CD4-positive, alpha-beta T cell (primary cell): ENCODE measurements at regions of chrX and their contacts with region 1.

Region 1: DNA sequence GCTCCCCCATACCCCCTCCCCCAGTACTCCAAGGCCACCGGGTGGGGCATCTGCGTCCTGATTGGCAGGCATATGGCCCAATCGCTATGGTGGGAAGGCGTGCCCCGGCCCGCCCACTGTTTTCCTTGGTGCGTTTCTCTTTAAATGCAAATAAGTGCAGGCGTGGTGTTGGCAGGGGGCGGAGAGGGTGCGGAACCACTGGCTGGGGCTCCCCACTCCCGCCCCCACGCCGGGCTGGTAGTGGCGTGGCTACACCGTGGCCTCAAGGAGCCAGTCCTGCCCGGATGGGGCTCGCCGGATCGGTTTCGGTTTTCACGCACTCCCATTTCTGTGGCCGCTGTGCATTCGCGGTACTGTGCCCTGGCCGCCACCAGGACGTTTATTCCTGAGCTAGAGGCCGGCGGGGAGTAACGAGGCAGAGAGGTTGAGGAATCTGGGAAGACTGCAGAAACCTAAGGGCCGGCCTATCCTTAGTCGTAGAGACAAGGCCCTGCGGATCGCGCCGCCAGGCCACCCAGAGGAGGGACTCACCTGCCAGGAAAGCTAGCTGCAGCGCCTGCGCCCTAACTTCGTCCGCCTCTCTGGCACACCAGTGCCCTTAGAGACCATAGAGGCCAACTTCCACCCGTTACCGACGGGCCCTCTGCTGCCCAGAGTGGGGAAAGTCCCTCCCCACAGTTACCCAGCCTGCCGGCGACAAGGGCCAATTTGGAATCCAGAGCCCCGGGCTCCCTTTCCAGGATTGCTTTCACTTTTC is 405 bp upstream of the AMER1 start:
- DNase-seq: peak; percentile 77 to 93 (median 86)
- ATAC-seq: peak; percentile 86
- H3K4me3 ChIP-seq: peak overlapping the region; percentile 86
- H3K4me3 Mint-ChIP-seq: peak overlapping the region; percentile 99
- H3K27ac ChIP-seq: peak overlapping the region; percentile 81 to 90
- H3K27ac Mint-ChIP-seq: peak overlapping the region; percentile 90
- H3K4me1 ChIP-seq: peaks cover 24% of the 10 kb centered on the region
- H3K4me1 Mint-ChIP-seq: peaks cover 22% of the 10 kb centered on the region
- H3K27me3 ChIP-seq: no peaks in the 10 kb centered on the region
- H3K27me3 Mint-ChIP-seq: no peaks in the 10 kb centered on the region
- CTCF ChIP-seq: no peak

Region 2: GRCh38 chrX:63551856-63552255 is 654.1 kb before region 1 on chrX:
- CTCF ChIA-PET with region 1: no interaction called
- POLR2A ChIA-PET with region 1: no interaction called
- intact Hi-C with region 1: loop called in 1 of 2 experiments (anchors 10 kb)
- DNase-seq: no peak
- ATAC-seq: no peak
- H3K4me3 ChIP-seq: no peak overlapping the region
- H3K4me3 Mint-ChIP-seq: no peak overlapping the region
- H3K27ac ChIP-seq: no peak overlapping the region
- H3K27ac Mint-ChIP-seq: no peak overlapping the region
- H3K4me1 ChIP-seq: no peaks in the 10 kb centered on the region
- H3K4me1 Mint-ChIP-seq: no peaks in the 10 kb centered on the region
- H3K27me3 ChIP-seq: no peaks in the 10 kb centered on the region
- H3K27me3 Mint-ChIP-seq: no peaks in the 10 kb centered on the region
- CTCF ChIP-seq: no peak

Region 3: GRCh38 chrX:63754860-63755582 is 450.9 kb before region 1 on chrX:
- CTCF ChIA-PET with region 1: no interaction called
- POLR2A ChIA-PET with region 1: interaction called, 14 read pairs
- intact Hi-C with region 1: loop called in 1 of 2 experiments (anchors 2 kb)
- DNase-seq: peak; percentile 70 to 94 (median 83)
- ATAC-seq: peak; percentile 92
- H3K4me3 ChIP-seq: peak overlapping the region; percentile 93
- H3K4me3 Mint-ChIP-seq: peak overlapping the region; percentile 99
- H3K27ac ChIP-seq: peak overlapping the region; percentile 70 to 80
- H3K27ac Mint-ChIP-seq: peak overlapping the region; percentile 97
- H3K4me1 ChIP-seq: peaks cover 11% of the 10 kb centered on the region
- H3K4me1 Mint-ChIP-seq: peaks cover 28% of the 10 kb centered on the region
- H3K27me3 ChIP-seq: no peaks in the 10 kb centered on the region
- H3K27me3 Mint-ChIP-seq: no peaks in the 10 kb centered on the region
- CTCF ChIP-seq: no peak

Region 4: DNA sequence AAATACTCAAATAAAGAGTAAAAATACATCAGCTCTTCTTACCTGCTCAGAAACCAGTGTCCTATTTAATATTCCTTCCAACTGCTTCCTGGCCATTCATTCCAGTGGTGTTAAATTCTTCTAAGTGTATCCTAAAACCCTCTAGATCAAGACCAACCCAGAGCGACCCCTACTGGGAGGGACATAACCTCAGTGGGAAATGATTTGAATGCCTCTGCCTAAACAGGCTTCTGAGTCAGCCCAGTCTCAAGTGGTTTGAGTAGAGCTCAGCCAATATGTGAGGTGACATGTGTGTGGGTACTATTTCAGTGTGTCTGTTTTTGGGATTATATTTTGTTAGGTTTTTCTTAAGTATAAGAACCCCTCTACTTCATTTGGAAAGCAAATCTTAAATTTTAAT is 287.3 kb before region 1 on chrX:
- CTCF ChIA-PET with region 1: no interaction called
- POLR2A ChIA-PET with region 1: no interaction called
- intact Hi-C with region 1: no loop called
- DNase-seq: no peak
- ATAC-seq: no peak
- H3K4me3 ChIP-seq: no peak overlapping the region
- H3K4me3 Mint-ChIP-seq: no peak overlapping the region
- H3K27ac ChIP-seq: no peak overlapping the region
- H3K27ac Mint-ChIP-seq: no peak overlapping the region
- H3K4me1 ChIP-seq: no peaks in the 10 kb centered on the region
- H3K4me1 Mint-ChIP-seq: no peaks in the 10 kb centered on the region
- H3K27me3 ChIP-seq: no peaks in the 10 kb centered on the region
- H3K27me3 Mint-ChIP-seq: no peaks in the 10 kb centered on the region
- CTCF ChIP-seq: no peak

Region 5: GRCh38 chrX:64394874-64395567 is 189.1 kb after region 1 on chrX and contains the start of gene MTMR8:
- CTCF ChIA-PET with region 1: no interaction called
- POLR2A ChIA-PET with region 1: interaction called, 8 read pairs
- intact Hi-C with region 1: loop called (anchors 1 to 2 kb)
- DNase-seq: peak; percentile 59 to 89 (median 73)
- ATAC-seq: peak; percentile 95
- H3K4me3 ChIP-seq: peak within 1 kb of the TSS; percentile 85
- H3K4me3 Mint-ChIP-seq: peak within 1 kb of the TSS; percentile 90
- H3K27ac ChIP-seq: peak within 1 kb of the TSS; percentile 21 to 22
- H3K27ac Mint-ChIP-seq: peak within 1 kb of the TSS; percentile 85
- H3K4me1 ChIP-seq: peaks cover 17% of the 10 kb centered on the region
- H3K4me1 Mint-ChIP-seq: peaks cover 46% of the 10 kb centered on the region
- H3K27me3 ChIP-seq: no peaks in the 10 kb centered on the region
- H3K27me3 Mint-ChIP-seq: no peaks in the 10 kb centered on the region
- CTCF ChIP-seq: no peak
- total RNA-seq, gene MTMR8: 2.3 to 3.1 TPM

Region 6: GRCh38 chrX:64975989-64976672 is 770.2 kb after region 1 on chrX and contains the start of gene ZC4H2:
- CTCF ChIA-PET with region 1: no interaction called
- POLR2A ChIA-PET with region 1: no interaction called
- intact Hi-C with region 1: loop called (anchors 10 kb)
- DNase-seq: peak; percentile 34 to 85 (median 59)
- ATAC-seq: peak; percentile 96
- H3K4me3 ChIP-seq: peak within 1 kb of the TSS; percentile 74
- H3K4me3 Mint-ChIP-seq: peak within 1 kb of the TSS; percentile 98
- H3K27ac ChIP-seq: no peak within 1 kb of the TSS
- H3K27ac Mint-ChIP-seq: peak within 1 kb of the TSS; percentile 81
- H3K4me1 ChIP-seq: peaks cover 14% of the 10 kb centered on the region
- H3K4me1 Mint-ChIP-seq: peaks cover 28% of the 10 kb centered on the region
- H3K27me3 ChIP-seq: no peaks in the 10 kb centered on the region
- H3K27me3 Mint-ChIP-seq: no peaks in the 10 kb centered on the region
- CTCF ChIP-seq: no peak
- total RNA-seq, gene ZC4H2: 7.8 to 8.7 TPM

Region 7: DNA sequence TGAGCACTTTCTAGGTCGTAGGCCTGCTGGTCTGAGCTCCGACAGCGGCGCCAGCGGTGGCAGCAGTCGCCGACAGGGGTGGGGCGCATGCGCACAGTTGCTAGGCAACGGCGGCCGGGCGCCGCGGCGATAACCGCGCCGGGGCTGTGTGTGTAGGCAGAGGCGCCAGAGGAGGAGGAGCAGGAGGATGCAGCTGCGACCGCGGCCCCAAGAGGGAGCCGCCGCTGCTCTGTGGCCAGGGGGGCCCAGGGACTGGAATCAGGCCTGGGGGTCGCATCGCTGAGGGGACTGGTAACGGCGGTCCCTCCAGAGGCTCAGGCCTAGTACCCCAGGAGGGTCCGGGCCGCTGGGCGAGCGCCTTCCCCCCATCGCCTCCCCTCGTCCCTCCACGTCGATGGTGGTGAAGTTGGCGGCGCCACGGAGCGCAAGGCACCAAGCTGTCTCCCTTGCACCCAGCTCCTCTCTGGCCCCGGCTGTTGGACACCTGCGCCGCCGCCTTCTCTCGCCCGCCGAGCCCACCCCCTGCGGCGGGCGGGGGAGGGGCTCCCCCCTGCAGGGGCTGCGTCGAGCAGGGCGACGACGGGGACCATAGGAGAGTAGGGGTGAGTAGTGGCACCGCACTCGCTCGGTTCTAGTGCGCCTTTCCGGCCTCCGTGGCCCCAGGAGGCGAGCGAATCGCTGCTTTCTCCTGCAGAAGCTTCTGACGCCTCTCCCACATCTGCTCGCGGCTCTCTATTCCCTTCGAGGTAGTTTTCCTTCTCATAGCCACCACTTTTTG is 828.9 kb after region 1 on chrX:
- CTCF ChIA-PET with region 1: no interaction called
- POLR2A ChIA-PET with region 1: interaction called, 6 read pairs
- intact Hi-C with region 1: loop called in 1 of 2 experiments (anchors 5 kb)
- DNase-seq: peak; percentile 61 to 92 (median 78)
- ATAC-seq: peak; percentile 87
- H3K4me3 ChIP-seq: peak within 1 kb of the TSS; percentile 71
- H3K4me3 Mint-ChIP-seq: peak within 1 kb of the TSS; percentile 98
- H3K27ac ChIP-seq: peak within 1 kb of the TSS; percentile 52 to 59
- H3K27ac Mint-ChIP-seq: peak within 1 kb of the TSS; percentile 98
- H3K4me1 ChIP-seq: peaks cover 10% of the 10 kb centered on the region
- H3K4me1 Mint-ChIP-seq: peaks cover 42% of the 10 kb centered on the region
- H3K27me3 ChIP-seq: no peaks in the 10 kb centered on the region
- H3K27me3 Mint-ChIP-seq: no peaks in the 10 kb centered on the region
- CTCF ChIP-seq: peak; percentile 65

Region 8: DNA sequence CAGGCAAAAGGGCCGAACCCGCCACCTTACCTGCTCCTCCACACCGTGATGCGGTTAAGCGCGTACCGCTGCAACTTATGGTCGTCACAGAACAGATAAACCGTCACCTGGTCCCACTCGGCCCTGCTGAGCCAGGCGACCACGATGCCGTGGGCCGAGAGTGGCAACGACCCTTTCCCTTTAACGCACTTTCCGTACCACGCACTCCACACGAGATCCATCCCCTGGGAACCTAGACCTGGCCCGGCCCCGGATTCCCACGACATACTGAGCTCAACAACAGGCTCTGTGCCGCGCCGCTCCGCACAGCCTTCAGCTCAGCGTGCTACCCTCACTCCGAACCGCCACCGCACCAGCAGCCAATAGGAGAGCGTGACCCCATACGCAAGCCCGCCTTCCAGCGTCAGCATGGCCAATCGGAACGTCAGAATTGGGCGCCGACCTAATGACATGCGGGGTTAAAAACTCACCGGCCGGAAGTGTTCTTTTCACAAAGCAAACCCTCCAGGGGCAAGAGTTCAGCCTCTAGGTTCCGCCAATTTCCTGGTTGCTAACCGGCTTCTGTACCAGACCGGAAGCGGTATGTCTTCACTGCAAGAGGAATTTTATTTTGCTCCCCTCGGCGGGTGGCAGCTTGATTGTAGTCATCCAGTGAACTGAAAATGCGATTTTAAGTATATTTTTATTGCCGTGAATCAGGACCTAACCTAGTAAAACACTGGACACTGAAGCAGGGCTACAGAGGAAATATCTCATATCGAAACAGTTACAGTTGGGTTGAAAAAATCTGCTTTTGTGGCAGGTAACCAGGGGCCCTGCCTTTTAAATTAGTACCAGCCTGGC is 1328.8 kb after region 1 on chrX and contains the start of gene LAS1L:
- CTCF ChIA-PET with region 1: no interaction called
- POLR2A ChIA-PET with region 1: interaction called, 4 read pairs
- intact Hi-C with region 1: loop called (anchors 5 to 10 kb)
- DNase-seq: peak; percentile 79 to 96 (median 86)
- ATAC-seq: peak; percentile 99
- H3K4me3 ChIP-seq: peak within 1 kb of the TSS; percentile 90
- H3K4me3 Mint-ChIP-seq: peak within 1 kb of the TSS; percentile 100
- H3K27ac ChIP-seq: peak within 1 kb of the TSS; percentile 64 to 76
- H3K27ac Mint-ChIP-seq: peak within 1 kb of the TSS; percentile 89
- H3K4me1 ChIP-seq: peaks cover 19% of the 10 kb centered on the region
- H3K4me1 Mint-ChIP-seq: peaks cover 21% of the 10 kb centered on the region
- H3K27me3 ChIP-seq: no peaks in the 10 kb centered on the region
- H3K27me3 Mint-ChIP-seq: no peaks in the 10 kb centered on the region
- CTCF ChIP-seq: no peak
- total RNA-seq, gene LAS1L: 47.4 to 51.6 TPM